Dorsolateral prefrontal cortex (tissue), 120 donors: ENCODE measurements at regions of chr17 and their contacts with region 1.

Region 1: DNA sequence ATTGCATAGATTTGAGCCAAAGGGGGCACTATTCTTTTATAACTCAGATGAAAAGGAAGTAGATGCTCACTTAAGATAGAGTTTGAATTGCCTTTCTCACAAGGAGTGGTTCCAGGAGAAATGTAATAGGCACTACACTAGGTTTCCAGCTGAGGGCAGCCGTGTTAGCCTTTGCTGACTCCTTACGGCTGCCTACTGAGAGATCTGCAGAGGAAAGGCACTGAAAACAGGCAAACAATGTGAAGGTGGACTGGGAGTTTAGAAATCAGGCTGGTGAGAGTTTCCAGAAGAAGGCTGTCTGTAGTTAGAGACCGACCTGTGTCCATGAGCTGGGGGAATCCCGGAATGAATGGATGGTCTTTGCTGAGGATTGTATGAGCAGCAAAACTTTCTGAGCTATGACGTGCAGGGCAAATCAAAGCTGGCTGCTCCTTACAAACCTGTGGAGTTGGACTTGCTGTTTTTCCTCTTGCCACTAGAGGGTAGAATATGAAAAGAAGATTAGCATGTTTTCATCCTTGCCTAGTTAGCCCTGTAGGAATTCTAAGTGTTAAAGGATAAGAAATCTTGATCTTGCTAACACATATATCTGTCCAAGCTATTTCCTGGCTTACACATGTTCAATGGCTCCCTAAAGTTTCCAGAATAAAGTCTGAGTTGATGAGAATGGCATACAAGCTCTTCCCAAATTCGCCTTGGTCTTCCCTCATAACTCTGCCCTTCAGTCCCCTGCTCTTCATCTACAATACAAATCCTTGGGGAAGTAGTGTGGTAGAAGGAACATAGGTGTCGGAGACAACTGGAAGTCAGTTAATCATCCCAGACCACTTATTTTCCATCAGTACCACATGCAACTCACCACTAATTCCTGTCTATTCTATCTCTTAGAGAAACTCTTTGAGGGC is 20.1 kb upstream of the TAOK1 start:
- DNase-seq: peak in 9 of 10 donors; percentile 21 to 59 (median 54)
- H3K4me3 ChIP-seq: peak overlapping the region in 13 of 59 donors; percentile 0 to 40 (median 15)
- H3K27ac ChIP-seq: peak overlapping the region in 55 of 59 donors; percentile 17 to 88 (median 67)
- H3K27me3 ChIP-seq: no peaks in the 10 kb centered on the region
- CTCF ChIP-seq: peak; percentile 80 to 99 (median 90)

Region 2: DNA sequence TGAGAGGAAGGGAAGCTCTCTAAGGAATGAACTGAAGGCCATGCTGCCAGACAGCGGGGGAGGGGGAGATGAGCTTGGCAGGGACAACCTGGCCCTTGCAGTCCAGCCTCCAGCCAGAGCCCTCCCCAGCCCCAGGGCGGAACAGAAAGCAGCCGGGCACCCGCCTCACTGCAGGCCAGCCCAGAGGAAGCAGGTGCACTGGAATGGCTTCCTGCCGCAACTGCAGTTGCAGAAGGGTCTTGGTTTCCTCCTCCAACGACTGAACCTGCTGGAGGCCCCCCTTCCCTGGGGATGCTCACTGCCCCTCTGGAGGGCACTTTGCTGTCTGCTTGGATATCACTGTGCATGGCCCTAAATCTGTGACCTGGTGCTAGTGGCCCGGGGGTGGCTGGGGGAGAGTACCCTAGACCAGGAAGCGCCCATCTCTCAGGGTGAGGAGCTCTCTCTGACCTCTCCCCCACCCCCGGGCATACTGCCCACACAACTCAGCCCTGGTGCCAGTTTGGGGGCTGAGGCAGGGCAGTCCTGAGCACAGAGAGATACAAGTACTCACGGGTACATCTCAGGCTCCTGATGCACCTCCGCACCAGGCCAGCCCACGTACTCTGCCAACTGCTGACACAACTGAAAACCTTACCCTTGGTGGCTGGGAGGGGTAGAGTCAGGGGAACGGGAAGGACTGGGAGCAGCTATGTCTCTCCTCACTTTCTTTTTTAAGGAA is 231.0 kb before region 1 on chr17:
- intact Hi-C with region 1: loop called in 1 of 2 experiments (anchors 10 kb)
- DNase-seq: peak in 3 of 10 donors; percentile 55 to 76 (median 64)
- H3K4me3 ChIP-seq: peak overlapping the region in 40 of 59 donors; percentile 13 to 57 (median 44)
- H3K27ac ChIP-seq: peak overlapping the region in 55 of 59 donors; percentile 10 to 92 (median 82)
- H3K27me3 ChIP-seq: no peaks in the 10 kb centered on the region
- CTCF ChIP-seq: no peak

Region 3: GRCh38 chr17:29533976-29534375 is 163.9 kb after region 1 on chr17:
- intact Hi-C with region 1: loop called (anchors 1 to 5 kb)
- DNase-seq: peak in 4 of 10 donors; percentile 41 to 50 (median 45)
- H3K4me3 ChIP-seq: peak overlapping the region in 4 of 59 donors; percentile 0 to 11 (median 2)
- H3K27ac ChIP-seq: peak overlapping the region in 58 of 59 donors; percentile 28 to 89 (median 74)
- H3K27me3 ChIP-seq: no peaks in the 10 kb centered on the region
- CTCF ChIP-seq: no peak

Region 4: DNA sequence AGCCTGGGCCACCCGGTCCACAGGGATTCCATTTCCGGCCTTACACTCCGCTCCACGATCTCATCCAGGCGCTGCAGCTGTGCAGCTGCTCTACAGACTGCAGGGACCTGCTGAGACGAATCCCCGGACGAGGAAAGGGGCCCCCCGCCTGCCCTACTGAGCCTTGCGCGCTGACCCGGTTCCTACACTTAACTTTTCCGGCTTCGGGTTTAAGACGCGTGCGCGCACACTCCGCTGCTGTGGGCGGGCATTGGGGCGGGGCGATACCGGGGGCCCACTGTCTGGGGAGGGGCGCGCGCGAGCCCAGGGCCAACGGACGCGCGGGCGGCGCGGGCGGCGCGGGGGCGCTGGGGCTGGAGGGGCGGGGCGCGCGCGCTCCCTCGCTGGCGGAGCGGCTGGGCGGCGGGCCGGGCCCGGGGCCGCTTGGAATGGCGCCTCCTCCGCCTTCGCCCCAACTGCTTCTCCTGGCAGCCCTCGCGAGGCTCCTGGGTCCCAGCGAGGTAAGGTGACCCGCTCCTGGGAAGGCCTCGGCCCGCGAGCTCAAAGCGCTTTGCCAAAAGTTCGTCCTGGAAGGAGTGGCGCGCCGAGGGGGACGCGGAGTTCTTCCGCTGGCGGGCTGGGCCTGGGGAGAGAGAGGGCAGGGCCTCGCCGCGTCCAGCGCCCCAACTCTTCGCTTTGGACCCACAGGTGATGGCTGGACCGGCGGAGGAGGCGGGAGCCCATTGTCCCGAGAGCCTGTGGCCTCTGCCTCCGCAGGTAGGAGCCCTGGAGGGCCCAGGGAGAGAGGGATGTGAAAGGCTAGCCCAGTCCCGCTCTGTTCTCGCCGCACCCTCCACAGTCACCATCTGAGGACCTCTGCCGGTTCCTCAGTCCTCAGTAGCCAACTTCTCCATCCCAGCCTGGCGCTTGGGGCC is 198.5 kb after region 1 on chr17 and contains the start of gene TP53I13:
- intact Hi-C with region 1: loop called (anchors 5 to 10 kb)
- DNase-seq: peak in 8 of 10 donors; percentile 61 to 85 (median 78)
- H3K4me3 ChIP-seq: peak within 1 kb of the TSS; percentile 39 to 89 (median 74)
- H3K27ac ChIP-seq: peak within 1 kb of the TSS; percentile 63 to 94 (median 87)
- H3K27me3 ChIP-seq: peaks cover 0 to 13% (median 0%) of the 10 kb centered on the region in 45 donors
- CTCF ChIP-seq: peak in 1 of 56 donors; percentile 14
- total RNA-seq, gene TP53I13: 10.1 to 40.2 (median 20.1) TPM